Naive thymus-derived CD8-positive, alpha-beta T cell (primary cell): ENCODE measurements at regions of chr20 and their contacts with region 1.

Region 1: GRCh38 chr20:49278036-49278817 is at the start of gene ZNFX1:
- DNase-seq: peak; percentile 95 to 99 (median 98)
- ATAC-seq: peak; percentile 83 to 87
- H3K4me3 Mint-ChIP-seq: peak within 1 kb of the TSS; percentile 93 to 100 (median 96)
- H3K27ac Mint-ChIP-seq: peak within 1 kb of the TSS; percentile 95 to 99 (median 98)
- H3K4me1 Mint-ChIP-seq: peaks cover 38 to 77% (median 71%) of the 10 kb centered on the region in 4 donors
- H3K27me3 Mint-ChIP-seq: peaks cover 0 to 3% (median 0%) of the 10 kb centered on the region in 5 donors
- polyA plus RNA-seq, gene ZNFX1: 28.1 to 45.0 (median 35.8) TPM

Region 2: GRCh38 chr20:49219089-49219923 is 58.9 kb before region 1 on chr20 and contains the start of gene DDX27:
- POLR2A ChIA-PET with region 1: interaction called, 10 read pairs
- DNase-seq: peak; percentile 85 to 98 (median 97)
- ATAC-seq: peak; percentile 88
- H3K4me3 Mint-ChIP-seq: peak within 1 kb of the TSS; percentile 87 to 99 (median 96)
- H3K27ac Mint-ChIP-seq: peak within 1 kb of the TSS; percentile 94 to 100 (median 98)
- H3K4me1 Mint-ChIP-seq: peaks cover 7 to 37% (median 30%) of the 10 kb centered on the region in 4 donors
- H3K27me3 Mint-ChIP-seq: no peaks in the 10 kb centered on the region
- polyA plus RNA-seq, gene DDX27: 28.4 to 57.7 (median 37.9) TPM

Region 3: GRCh38 chr20:49297605-49298530 is 19.6 kb after region 1 on chr20:
- POLR2A ChIA-PET with region 1: interaction called, 41 read pairs
- DNase-seq: peak in 3 of 10 donors; percentile 29 to 65 (median 34)
- ATAC-seq: peak; percentile 78 to 91
- H3K4me3 Mint-ChIP-seq: peak overlapping the region in 7 of 10 donors; percentile 8 to 77 (median 55)
- H3K27ac Mint-ChIP-seq: peak overlapping the region; percentile 52 to 94 (median 87)
- H3K4me1 Mint-ChIP-seq: peaks cover 7 to 16% (median 14%) of the 10 kb centered on the region in 4 donors
- H3K27me3 Mint-ChIP-seq: no peaks in the 10 kb centered on the region

Region 4: GRCh38 chr20:49303065-49303552 is 24.9 kb after region 1 on chr20:
- POLR2A ChIA-PET with region 1: interaction called, 41 read pairs
- DNase-seq: no peak
- ATAC-seq: no peak
- H3K4me3 Mint-ChIP-seq: peak overlapping the region in 1 of 10 donors; percentile 34
- H3K27ac Mint-ChIP-seq: peak overlapping the region in 2 of 10 donors; percentile 36 to 54
- H3K4me1 Mint-ChIP-seq: peaks cover 5 to 23% (median 16%) of the 10 kb centered on the region in 4 donors
- H3K27me3 Mint-ChIP-seq: no peaks in the 10 kb centered on the region

Region 5: DNA sequence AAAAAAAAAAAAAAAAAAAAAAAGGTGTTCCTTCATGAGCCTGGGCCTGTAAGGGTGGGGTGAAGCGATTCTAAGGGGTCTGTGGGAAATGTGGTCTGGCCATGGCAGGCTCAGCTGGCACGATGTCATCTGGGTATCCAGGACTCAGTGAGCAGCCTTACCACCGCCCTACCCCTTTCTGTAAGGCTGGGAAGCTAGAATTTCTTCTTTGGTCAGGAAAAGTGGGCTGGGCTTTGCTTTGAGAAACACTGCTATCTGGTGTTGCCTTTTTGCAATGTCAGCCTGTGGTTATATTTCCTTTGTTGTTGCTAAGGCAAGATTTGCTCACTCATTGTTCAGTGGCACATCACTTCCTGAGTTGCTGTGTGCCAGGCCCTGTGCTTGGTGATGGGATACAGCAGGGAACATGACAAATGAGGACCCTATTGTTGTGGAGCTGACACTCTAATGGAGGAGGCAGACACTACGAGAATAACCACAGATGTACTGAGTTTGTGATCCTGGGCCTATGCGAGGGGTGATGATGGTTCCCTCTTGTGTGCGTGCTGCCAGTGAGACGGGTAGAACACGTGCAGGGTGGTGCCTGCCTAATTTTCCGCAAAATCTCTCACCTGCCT is 45.5 kb after region 1 on chr20:
- POLR2A ChIA-PET with region 1: interaction called, 18 read pairs
- DNase-seq: peak in 6 of 10 donors; percentile 9 to 64 (median 40)
- ATAC-seq: peak; percentile 77
- H3K4me3 Mint-ChIP-seq: peak overlapping the region in 2 of 10 donors; percentile 15 to 44
- H3K27ac Mint-ChIP-seq: peak overlapping the region in 5 of 10 donors; percentile 13 to 83 (median 55)
- H3K4me1 Mint-ChIP-seq: peaks cover 12 to 30% (median 21%) of the 10 kb centered on the region in 4 donors
- H3K27me3 Mint-ChIP-seq: peaks cover 19 to 29% (median 19%) of the 10 kb centered on the region in 5 donors